ENCODE measurements at regions of chr6 and their contacts with region 1.

Region 1: DNA sequence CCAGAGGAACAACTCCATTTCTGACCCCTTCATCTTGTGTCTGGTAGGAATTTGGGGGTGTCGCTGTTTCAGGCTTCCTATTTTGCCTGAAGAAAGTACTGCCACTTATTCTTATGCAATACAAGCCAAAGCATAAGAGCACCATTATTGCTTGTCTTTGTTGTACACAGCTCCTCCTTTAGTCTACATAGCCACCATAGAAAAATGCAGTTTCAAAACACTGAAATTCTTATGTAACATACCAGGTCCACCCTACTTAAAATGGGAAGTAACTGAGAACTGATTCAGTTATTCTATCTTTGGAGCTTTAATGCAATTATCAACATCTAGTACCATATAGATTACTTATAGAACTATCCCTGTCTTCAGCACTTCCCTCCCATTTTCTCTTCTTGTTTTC is 255.5 kb downstream of the ARHGAP18 start:
- DNase-seq: no peak
- ATAC-seq: no peak
- H3K4me3 Mint-ChIP-seq: no peak overlapping the region
- H3K27ac Mint-ChIP-seq: no peak overlapping the region
- H3K4me1 Mint-ChIP-seq: peaks cover 43% of the 10 kb centered on the region
- H3K27me3 Mint-ChIP-seq: no peaks in the 10 kb centered on the region

Region 2: GRCh38 chr6:130027948-130028347 is 573.5 kb after region 1 on chr6:
- CTCF ChIA-PET with region 1: no interaction called
- POLR2A ChIA-PET with region 1: no interaction called
- intact Hi-C with region 1: loop called in 1 of 2 experiments (anchors 5 kb)
- DNase-seq: no peak
- ATAC-seq: peak; percentile 67
- H3K4me3 Mint-ChIP-seq: no peak overlapping the region
- H3K27ac Mint-ChIP-seq: peak overlapping the region; percentile 66
- H3K4me1 Mint-ChIP-seq: peaks cover 62% of the 10 kb centered on the region
- H3K27me3 Mint-ChIP-seq: no peaks in the 10 kb centered on the region

Measured in activated CD4-positive, alpha-beta T cell treated with anti-CD3 and anti-CD28 coated beads for 36 hours (primary cell).